Dorsolateral prefrontal cortex (tissue), 120 donors: ENCODE measurements at regions of chr10 and their contacts with region 1.

Region 1: GRCh38 chr10:14093730-14094484 is 236.8 kb downstream of the FRMD4A start:
- DNase-seq: no peak
- H3K4me3 ChIP-seq: no peak overlapping the region
- H3K27ac ChIP-seq: peak overlapping the region in 8 of 59 donors; percentile 1 to 46 (median 21)
- H3K27me3 ChIP-seq: no peaks in the 10 kb centered on the region
- CTCF ChIP-seq: peak; percentile 26 to 74 (median 58)

Region 2: DNA sequence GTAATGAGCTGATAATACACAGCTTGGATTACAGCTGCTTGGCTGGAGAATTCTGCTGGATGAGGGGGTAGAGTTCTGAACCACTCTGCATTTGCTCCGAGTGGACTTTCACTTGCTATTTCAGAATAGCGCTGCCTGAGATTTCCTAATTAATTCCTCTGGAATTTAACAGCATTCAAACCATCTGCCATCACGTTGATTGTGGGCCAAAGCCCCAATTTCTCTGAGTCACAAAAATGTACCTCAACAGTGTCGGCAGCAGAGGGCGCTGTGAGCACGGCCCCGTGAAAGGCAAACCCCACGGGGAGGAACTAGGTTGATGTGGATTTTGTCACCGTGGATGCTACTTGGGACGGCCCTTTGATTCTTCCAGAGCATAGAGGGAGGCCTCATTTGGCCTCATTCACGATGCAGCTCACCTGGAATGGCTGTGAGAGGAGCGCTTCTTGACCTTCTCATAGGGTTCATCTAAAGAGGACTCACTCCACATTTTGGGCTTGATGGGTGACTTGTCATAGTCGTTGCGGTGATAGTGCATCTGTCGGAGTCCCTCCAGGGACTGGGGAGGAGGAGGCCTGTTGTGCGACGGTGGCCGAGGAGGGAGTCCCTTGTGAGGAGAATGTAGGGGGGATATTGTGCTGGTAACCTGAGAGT is 433.9 kb before region 1 on chr10:
- intact Hi-C with region 1: loop called (anchors 10 kb)
- DNase-seq: peak; percentile 63 to 82 (median 78)
- H3K4me3 ChIP-seq: peak overlapping the region in 2 of 59 donors; percentile 1 to 11
- H3K27ac ChIP-seq: peak overlapping the region in 56 of 59 donors; percentile 23 to 91 (median 78)
- H3K27me3 ChIP-seq: no peaks in the 10 kb centered on the region
- CTCF ChIP-seq: peak; percentile 78 to 96 (median 94)

Region 3: DNA sequence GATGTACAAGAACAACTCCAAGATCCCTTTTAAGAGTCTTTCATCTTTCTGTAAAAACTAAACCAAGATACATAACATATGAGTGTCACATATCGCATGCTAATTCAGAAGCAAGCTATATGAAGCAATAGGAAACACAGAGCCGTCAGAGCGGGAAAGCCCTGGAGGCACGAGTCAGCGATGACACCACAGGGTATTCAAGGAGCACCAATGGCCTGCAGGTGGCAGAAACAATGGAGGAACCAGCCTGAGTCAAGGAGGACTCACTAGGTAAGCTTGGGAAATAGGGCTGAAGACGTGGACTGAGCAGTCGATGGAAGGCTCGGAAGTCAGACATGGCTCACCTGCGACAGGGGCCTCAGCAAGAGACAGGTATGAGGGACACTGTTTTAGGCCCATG is 466.4 kb after region 1 on chr10:
- intact Hi-C with region 1: no loop called
- DNase-seq: no peak
- H3K4me3 ChIP-seq: peak overlapping the region in 18 of 59 donors; percentile 0 to 68 (median 16)
- H3K27ac ChIP-seq: peak overlapping the region; percentile 8 to 100 (median 86)
- H3K27me3 ChIP-seq: no peaks in the 10 kb centered on the region
- CTCF ChIP-seq: peak in 8 of 56 donors; percentile 8 to 40 (median 22)